ENCODE measurements at regions of chr10 and their contacts with region 1.

Region 1: DNA sequence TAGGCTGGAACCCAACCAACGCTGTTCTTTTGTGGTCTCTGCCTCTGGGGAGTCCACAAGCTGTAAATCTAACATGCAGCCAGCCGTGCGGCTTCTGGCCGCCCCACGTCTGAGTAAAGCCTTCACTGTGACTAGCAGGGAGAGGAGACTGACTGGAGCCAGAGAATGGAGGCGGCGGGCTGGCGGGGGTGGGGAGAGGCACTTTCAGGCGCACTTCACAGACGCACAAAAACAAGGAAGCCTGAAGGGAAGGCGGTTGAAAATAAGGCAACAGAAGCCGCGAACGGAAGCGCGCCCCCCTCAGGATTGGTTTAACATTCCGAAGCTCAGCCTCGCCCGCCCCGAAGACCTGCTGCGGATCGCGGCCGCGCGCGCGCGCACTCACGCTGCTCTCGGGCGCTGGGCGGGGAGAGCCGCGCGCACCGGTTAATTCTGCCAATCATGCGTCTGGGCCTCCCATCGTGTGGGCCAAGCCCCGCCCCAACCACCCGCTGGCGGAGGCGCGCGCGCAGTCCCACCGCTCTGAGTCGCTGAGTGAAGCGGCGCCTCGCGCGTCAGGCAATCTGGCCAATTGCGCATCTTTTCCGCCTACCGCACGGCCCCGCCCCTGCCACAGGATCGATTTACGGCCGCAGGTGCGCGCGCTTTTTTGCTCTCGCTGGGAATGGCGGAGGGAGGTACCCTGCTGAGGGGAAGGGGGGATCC is at the start of gene SFR1:
- DNase-seq: peak; percentile 91 to 96 (median 92)
- ATAC-seq: peak; percentile 95
- H3K4me3 ChIP-seq: peak within 1 kb of the TSS; percentile 64
- H3K27ac ChIP-seq: peak within 1 kb of the TSS; percentile 97
- H3K4me1 ChIP-seq: peaks cover 0 to 7% of the 10 kb centered on the region in 2 experiments; a peak in 1 of 5 replicates
- H3K27me3 ChIP-seq: no peaks in the 10 kb centered on the region
- CTCF ChIP-seq: peak; percentile 45 to 65 (median 64)
- EP300 ChIP-seq: peak; percentile 69
- POLR2A ChIP-seq: peak; percentile 85
- RAD21 ChIP-seq: peak in 1 of 2 experiments; percentile 35; a peak in 3 of 4 replicates
- polyA plus RNA-seq, gene SFR1: 17.8 to 18.7 TPM

Region 2: GRCh38 chr10:103918053-103918846 is 203.4 kb before region 1 on chr10 and contains the start of gene STN1:
- CTCF ChIA-PET with region 1: no interaction called
- POLR2A ChIA-PET with region 1: no interaction called
- in situ Hi-C with region 1: no loop called
- intact Hi-C with region 1: loop called (anchors 5 kb)
- DNase-seq: peak; percentile 92 to 95 (median 93)
- ATAC-seq: peak; percentile 97
- H3K4me3 ChIP-seq: peak within 1 kb of the TSS; percentile 75
- H3K27ac ChIP-seq: peak within 1 kb of the TSS; percentile 94
- H3K4me1 ChIP-seq: peaks cover 6 to 9% of the 10 kb centered on the region in 2 experiments
- H3K27me3 ChIP-seq: no peaks in the 10 kb centered on the region
- CTCF ChIP-seq: peak; percentile 22 to 34 (median 30); a peak in 2 of 6 replicates
- EP300 ChIP-seq: peak; percentile 46; the same call in 1 of the 2 replicates
- POLR2A ChIP-seq: peak; percentile 87
- RAD21 ChIP-seq: peak in 1 of 2 experiments; percentile 14; a peak in 1 of 4 replicates
- polyA plus RNA-seq, gene STN1: 12.0 to 16.0 TPM

Region 3: DNA sequence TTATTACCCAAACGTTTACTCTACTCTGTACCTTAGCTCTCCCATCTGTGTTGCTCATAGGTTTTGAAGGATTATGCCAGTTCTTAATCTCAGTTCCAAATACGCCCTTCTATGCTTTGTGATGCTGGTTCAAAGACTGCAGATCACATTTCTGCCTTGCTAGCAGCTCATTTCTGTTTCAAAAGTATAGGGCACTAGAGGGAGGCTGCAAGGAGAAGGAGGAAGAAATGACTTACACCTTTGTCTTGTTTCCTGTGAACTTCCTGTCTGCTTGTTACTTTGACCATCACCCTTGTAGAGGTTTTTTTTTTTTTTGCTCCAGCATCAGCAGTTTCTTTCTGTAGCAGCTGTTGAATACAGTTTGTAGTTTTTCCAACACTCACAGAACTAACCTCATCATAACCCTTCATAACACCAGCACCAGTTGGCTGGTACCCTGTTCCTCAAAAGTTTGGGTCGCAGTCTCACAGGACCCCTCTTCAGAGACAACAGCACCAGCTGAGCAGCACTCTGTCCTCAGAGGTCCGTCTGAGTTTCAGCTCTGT is 138.2 kb before region 1 on chr10:
- CTCF ChIA-PET with region 1: no interaction called
- POLR2A ChIA-PET with region 1: no interaction called
- in situ Hi-C with region 1: no loop called
- intact Hi-C with region 1: loop called (anchors 5 kb)
- DNase-seq: no peak
- ATAC-seq: 0 out of 3 replicates have a peak, but pooled peaks have one; percentile 23
- H3K4me3 ChIP-seq: no peak overlapping the region
- H3K27ac ChIP-seq: no peak overlapping the region
- H3K4me1 ChIP-seq: peaks cover 0 to 5% of the 10 kb centered on the region in 2 experiments; a peak in 3 of 5 replicates
- H3K27me3 ChIP-seq: no peaks in the 10 kb centered on the region
- CTCF ChIP-seq: no peak
- EP300 ChIP-seq: no peak
- POLR2A ChIP-seq: no peak
- RAD21 ChIP-seq: no peak

Region 4: GRCh38 chr10:104045151-104046089 is 76.3 kb before region 1 on chr10:
- CTCF ChIA-PET with region 1: no interaction called
- POLR2A ChIA-PET with region 1: no interaction called
- in situ Hi-C with region 1: no loop called
- intact Hi-C with region 1: no loop called
- DNase-seq: peak; percentile 17 to 41 (median 30)
- ATAC-seq: peak; percentile 88
- H3K4me3 ChIP-seq: no peak overlapping the region
- H3K27ac ChIP-seq: no peak overlapping the region
- H3K4me1 ChIP-seq: no peaks in the 10 kb centered on the region; a peak in 1 of 5 replicates
- H3K27me3 ChIP-seq: peaks cover 9 to 78% of the 10 kb centered on the region in 2 experiments; a peak in 3 of 5 replicates
- CTCF ChIP-seq: peak; percentile 38 to 57 (median 44); a peak in 5 of 6 replicates
- EP300 ChIP-seq: no peak
- POLR2A ChIP-seq: no peak
- RAD21 ChIP-seq: peak; percentile 48 to 70

Region 5: DNA sequence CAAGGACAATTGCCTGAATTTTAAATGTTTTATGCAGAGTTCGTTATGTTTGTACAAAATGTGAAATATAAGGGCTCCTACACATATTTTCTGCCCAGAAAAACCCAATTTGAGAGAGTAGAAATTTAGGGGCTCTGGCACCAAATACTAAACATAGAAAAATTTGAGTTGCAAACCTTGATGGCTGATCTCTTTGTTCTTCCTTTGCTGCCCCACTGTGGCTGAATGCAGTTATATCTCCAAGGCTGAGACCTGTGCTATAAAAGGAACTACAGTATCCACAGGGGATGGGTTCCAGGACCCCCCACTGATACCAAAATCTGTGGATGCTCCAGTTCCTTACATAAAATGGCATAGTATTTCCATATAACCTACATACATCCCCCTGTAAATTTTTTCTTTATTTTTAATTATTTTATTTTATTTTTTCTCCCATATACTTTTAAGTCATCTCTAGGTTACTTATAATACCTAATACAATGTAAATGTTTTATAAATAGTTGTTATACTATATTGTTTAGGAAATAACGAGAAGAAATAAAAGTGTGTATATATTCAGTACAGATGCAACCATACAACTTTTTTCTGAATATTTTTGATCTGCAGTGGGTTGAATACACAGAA is 88.0 kb after region 1 on chr10:
- CTCF ChIA-PET with region 1: no interaction called
- POLR2A ChIA-PET with region 1: interaction called, 3 read pairs
- in situ Hi-C with region 1: no loop called
- intact Hi-C with region 1: loop called (anchors 5 kb)
- DNase-seq: peak; percentile 27 to 46 (median 36)
- ATAC-seq: peak; percentile 87
- H3K4me3 ChIP-seq: no peak overlapping the region
- H3K27ac ChIP-seq: no peak overlapping the region
- H3K4me1 ChIP-seq: no peaks in the 10 kb centered on the region
- H3K27me3 ChIP-seq: no peaks in the 10 kb centered on the region
- CTCF ChIP-seq: peak; percentile 42 to 60 (median 54); a peak in 4 of 6 replicates
- EP300 ChIP-seq: no peak
- POLR2A ChIP-seq: no peak
- RAD21 ChIP-seq: peak; percentile 44 to 69

Measured in K562 (cell line).